Caco-2 (cell line): ENCODE measurements at regions of chr17 and their contacts with region 1.

Region 1: DNA sequence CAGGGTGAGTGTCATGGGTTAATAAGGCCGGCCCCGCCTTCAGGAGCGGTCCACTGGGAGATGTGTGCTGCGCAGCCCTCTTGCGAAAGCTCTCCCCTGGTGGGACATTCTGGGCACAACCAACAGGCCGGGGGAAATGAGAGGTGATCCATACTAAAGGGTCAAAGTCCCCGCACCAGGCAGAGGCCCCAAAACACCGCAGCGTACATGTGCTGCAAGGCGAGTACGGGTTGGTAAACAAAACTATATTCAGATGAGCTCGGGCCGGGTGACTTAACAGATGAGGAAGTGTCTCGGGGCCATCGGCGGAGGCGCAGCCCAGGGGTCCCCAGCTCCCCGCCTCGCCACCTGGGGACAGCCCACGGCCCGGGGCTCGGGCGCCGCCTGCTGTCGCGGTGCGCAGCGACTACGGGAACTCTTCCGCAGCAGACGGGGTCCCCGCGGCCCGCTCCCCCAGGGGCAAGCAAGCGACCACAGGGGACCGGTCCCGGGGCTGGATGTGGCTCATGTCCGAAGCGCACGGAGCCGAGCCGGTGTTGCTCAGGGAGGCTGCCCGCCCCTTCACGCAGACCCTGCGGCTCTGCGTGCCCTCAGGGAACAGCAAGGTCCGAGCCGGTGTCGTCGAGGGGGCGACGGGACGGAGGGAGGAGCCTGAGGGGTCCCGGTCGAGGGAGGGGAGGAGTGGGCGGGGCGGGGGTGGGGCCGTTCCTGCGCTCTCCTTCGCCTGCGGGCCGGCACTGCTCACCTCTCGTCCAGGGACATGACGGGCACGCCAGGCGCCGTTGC is at the start of gene RAB37:
- DNase-seq: peak; percentile 93 to 97
- H3K4me3 ChIP-seq: peak within 1 kb of the TSS; percentile 91
- H3K4me3 Mint-ChIP-seq: peak within 1 kb of the TSS; percentile 76
- H3K27ac Mint-ChIP-seq: peak within 1 kb of the TSS; percentile 71
- H3K4me1 ChIP-seq: peaks cover 24% of the 10 kb centered on the region
- H3K4me1 Mint-ChIP-seq: peaks cover 6% of the 10 kb centered on the region
- H3K27me3 ChIP-seq: no peaks in the 10 kb centered on the region
- H3K27me3 Mint-ChIP-seq: no peaks in the 10 kb centered on the region
- CTCF ChIP-seq: peak; percentile 56 to 66
- total RNA-seq, gene RAB37: 12.3 and 14.8 TPM in 2 replicates

Region 2: GRCh38 chr17:74599448-74599939 is 137.2 kb before region 1 on chr17:
- CTCF ChIA-PET with region 1: no interaction called
- POLR2A ChIA-PET with region 1: no interaction called
- intact Hi-C with region 1: no loop called
- DNase-seq: no peak
- H3K4me3 ChIP-seq: no peak overlapping the region
- H3K4me3 Mint-ChIP-seq: no peak overlapping the region
- H3K27ac Mint-ChIP-seq: no peak overlapping the region
- H3K4me1 ChIP-seq: no peaks in the 10 kb centered on the region
- H3K4me1 Mint-ChIP-seq: no peaks in the 10 kb centered on the region
- H3K27me3 ChIP-seq: peaks cover 1% of the 10 kb centered on the region; the same call in 1 of the 2 replicates
- H3K27me3 Mint-ChIP-seq: peaks cover 41% of the 10 kb centered on the region
- CTCF ChIP-seq: no peak

Region 3: GRCh38 chr17:74610108-74610507 is 126.6 kb before region 1 on chr17:
- CTCF ChIA-PET with region 1: no interaction called
- POLR2A ChIA-PET with region 1: no interaction called
- intact Hi-C with region 1: no loop called
- DNase-seq: peak in 1 of 2 experiments; percentile 46
- H3K4me3 ChIP-seq: no peak overlapping the region
- H3K4me3 Mint-ChIP-seq: no peak overlapping the region
- H3K27ac Mint-ChIP-seq: no peak overlapping the region
- H3K4me1 ChIP-seq: no peaks in the 10 kb centered on the region
- H3K4me1 Mint-ChIP-seq: no peaks in the 10 kb centered on the region
- H3K27me3 ChIP-seq: no peaks in the 10 kb centered on the region; the same call in 1 of the 2 replicates
- H3K27me3 Mint-ChIP-seq: peaks cover 21% of the 10 kb centered on the region
- CTCF ChIP-seq: no peak

Region 4: GRCh38 chr17:74671031-74671771 is 65.5 kb before region 1 on chr17:
- CTCF ChIA-PET with region 1: interaction called, 12 read pairs
- POLR2A ChIA-PET with region 1: no interaction called
- intact Hi-C with region 1: no loop called
- DNase-seq: peak; percentile 83 to 89
- H3K4me3 ChIP-seq: no peak overlapping the region
- H3K4me3 Mint-ChIP-seq: no peak overlapping the region
- H3K27ac Mint-ChIP-seq: no peak overlapping the region
- H3K4me1 ChIP-seq: peaks cover 13% of the 10 kb centered on the region; the same call in 1 of the 2 replicates
- H3K4me1 Mint-ChIP-seq: peaks cover 16% of the 10 kb centered on the region
- H3K27me3 ChIP-seq: no peaks in the 10 kb centered on the region
- H3K27me3 Mint-ChIP-seq: peaks cover 10% of the 10 kb centered on the region
- CTCF ChIP-seq: no peak

Region 5: DNA sequence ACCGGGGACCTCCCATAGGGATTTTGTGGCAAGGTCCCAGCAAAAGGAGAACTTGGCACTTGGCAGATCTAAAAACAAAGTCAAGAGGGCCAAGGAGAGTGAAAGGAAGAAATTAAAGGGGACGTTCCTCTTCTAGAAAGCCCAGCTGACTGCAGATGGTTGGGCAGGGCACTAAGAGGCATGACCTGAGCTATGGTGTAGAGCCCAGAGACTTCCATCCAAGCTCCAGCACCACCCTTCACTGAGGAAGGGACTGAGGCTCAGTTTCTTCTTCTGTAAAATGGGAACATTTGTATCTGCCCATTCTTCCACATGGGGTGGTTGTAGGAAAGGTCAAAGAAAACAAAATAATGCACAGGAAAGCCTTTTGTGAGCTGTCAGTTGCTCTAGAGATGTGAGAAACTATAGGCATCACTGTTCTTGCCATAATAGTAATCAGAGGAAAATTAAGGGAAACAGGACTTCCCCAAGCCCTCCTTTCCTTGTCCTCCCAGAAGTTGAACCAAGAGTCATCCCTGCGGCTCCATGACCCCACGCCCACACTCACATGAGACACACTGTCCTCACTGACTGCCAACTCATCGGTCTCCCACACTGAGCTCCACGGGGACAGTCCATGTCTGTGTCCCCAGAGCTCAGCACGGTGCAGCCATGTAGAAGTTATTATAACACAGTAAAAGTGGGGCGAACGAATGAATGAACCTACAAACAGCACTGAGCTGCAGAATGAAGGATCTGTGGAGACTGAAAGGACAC is 34.4 kb before region 1 on chr17:
- CTCF ChIA-PET with region 1: interaction called, 15 read pairs
- POLR2A ChIA-PET with region 1: interaction called, 3 read pairs
- intact Hi-C with region 1: no loop called
- DNase-seq: no peak
- H3K4me3 ChIP-seq: no peak overlapping the region
- H3K4me3 Mint-ChIP-seq: no peak overlapping the region
- H3K27ac Mint-ChIP-seq: no peak overlapping the region
- H3K4me1 ChIP-seq: peaks cover 2% of the 10 kb centered on the region; the same call in 1 of the 2 replicates
- H3K4me1 Mint-ChIP-seq: peaks cover 17% of the 10 kb centered on the region
- H3K27me3 ChIP-seq: no peaks in the 10 kb centered on the region
- H3K27me3 Mint-ChIP-seq: no peaks in the 10 kb centered on the region
- CTCF ChIP-seq: no peak

Region 6: GRCh38 chr17:74759243-74759801 is 22.6 kb after region 1 on chr17:
- CTCF ChIA-PET with region 1: interaction called, 25 read pairs
- POLR2A ChIA-PET with region 1: interaction called, 3 read pairs
- intact Hi-C with region 1: no loop called
- DNase-seq: peak; percentile 71 to 73
- H3K4me3 ChIP-seq: no peak overlapping the region
- H3K4me3 Mint-ChIP-seq: peak overlapping the region; percentile 69
- H3K27ac Mint-ChIP-seq: peak overlapping the region; percentile 94
- H3K4me1 ChIP-seq: peaks cover 73% of the 10 kb centered on the region
- H3K4me1 Mint-ChIP-seq: peaks cover 41% of the 10 kb centered on the region
- H3K27me3 ChIP-seq: no peaks in the 10 kb centered on the region
- H3K27me3 Mint-ChIP-seq: no peaks in the 10 kb centered on the region
- CTCF ChIP-seq: peak in 1 of 2 experiments; percentile 30

Region 7: DNA sequence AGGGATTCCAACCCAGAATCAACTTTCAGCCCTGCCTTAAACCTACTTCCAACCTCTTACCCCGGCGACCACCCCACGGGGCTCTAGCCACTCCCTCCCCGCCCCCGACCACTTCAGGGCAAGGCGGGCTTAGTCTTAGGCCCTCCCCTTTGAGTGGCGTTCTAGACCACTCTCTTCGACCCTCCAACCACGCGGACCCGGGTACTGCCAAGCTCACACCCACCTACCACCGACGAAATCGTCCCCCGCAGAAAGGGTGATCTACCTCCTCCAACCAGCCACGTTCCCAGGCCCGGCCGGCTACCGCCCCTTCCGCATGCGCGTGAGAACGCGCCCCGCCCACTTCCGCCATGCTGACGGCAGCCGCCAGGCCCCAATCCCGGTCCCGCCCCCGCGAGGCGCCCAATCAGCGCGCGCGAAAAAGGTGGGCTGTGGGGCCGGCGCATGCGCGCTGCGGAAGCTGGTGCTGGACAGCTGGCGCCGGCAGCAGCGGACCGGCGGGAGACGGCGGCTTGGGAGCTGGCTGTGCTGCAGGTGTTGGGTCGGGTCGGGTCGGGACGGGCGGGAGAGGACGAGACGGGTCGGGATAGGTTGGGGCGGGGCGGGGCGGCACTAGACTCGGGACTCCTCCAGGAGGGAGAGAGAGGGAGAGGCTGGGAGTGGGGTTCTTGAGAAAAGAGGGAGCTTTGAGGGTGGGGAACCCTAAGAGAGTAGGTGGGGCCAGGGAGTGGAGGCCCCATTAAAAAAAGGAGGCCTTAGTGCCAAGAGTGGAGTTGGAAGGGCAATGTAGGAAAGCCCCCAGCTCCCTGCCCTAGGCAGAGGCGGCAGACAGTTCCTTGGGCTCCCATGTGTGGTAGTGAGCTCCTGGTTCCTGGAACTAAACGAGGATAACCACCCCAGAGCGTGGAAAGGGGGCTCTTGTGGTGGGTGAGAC is 39.6 kb after region 1 on chr17 and contains the start of gene NAT9:
- CTCF ChIA-PET with region 1: interaction called, 26 read pairs
- POLR2A ChIA-PET with region 1: interaction called, 7 read pairs
- intact Hi-C with region 1: no loop called
- DNase-seq: peak; percentile 97 to 100
- H3K4me3 ChIP-seq: peak within 1 kb of the TSS; percentile 80
- H3K4me3 Mint-ChIP-seq: peak within 1 kb of the TSS; percentile 97
- H3K27ac Mint-ChIP-seq: peak within 1 kb of the TSS; percentile 95
- H3K4me1 ChIP-seq: peaks cover 27% of the 10 kb centered on the region
- H3K4me1 Mint-ChIP-seq: peaks cover 22% of the 10 kb centered on the region
- H3K27me3 ChIP-seq: no peaks in the 10 kb centered on the region
- H3K27me3 Mint-ChIP-seq: no peaks in the 10 kb centered on the region
- CTCF ChIP-seq: no peak
- total RNA-seq, gene NAT9: 84.5 and 89.5 TPM in 2 replicates

Region 8: GRCh38 chr17:74873038-74873873 is 136.6 kb after region 1 on chr17:
- CTCF ChIA-PET with region 1: interaction called, 11 read pairs
- POLR2A ChIA-PET with region 1: interaction called, 13 read pairs
- intact Hi-C with region 1: no loop called
- DNase-seq: peak; percentile 99 to 100
- H3K4me3 ChIP-seq: peak overlapping the region; percentile 83
- H3K4me3 Mint-ChIP-seq: peak overlapping the region; percentile 84
- H3K27ac Mint-ChIP-seq: peak overlapping the region; percentile 55
- H3K4me1 ChIP-seq: peaks cover 12% of the 10 kb centered on the region
- H3K4me1 Mint-ChIP-seq: peaks cover 21% of the 10 kb centered on the region
- H3K27me3 ChIP-seq: no peaks in the 10 kb centered on the region
- H3K27me3 Mint-ChIP-seq: no peaks in the 10 kb centered on the region
- CTCF ChIP-seq: no peak

Region 9: DNA sequence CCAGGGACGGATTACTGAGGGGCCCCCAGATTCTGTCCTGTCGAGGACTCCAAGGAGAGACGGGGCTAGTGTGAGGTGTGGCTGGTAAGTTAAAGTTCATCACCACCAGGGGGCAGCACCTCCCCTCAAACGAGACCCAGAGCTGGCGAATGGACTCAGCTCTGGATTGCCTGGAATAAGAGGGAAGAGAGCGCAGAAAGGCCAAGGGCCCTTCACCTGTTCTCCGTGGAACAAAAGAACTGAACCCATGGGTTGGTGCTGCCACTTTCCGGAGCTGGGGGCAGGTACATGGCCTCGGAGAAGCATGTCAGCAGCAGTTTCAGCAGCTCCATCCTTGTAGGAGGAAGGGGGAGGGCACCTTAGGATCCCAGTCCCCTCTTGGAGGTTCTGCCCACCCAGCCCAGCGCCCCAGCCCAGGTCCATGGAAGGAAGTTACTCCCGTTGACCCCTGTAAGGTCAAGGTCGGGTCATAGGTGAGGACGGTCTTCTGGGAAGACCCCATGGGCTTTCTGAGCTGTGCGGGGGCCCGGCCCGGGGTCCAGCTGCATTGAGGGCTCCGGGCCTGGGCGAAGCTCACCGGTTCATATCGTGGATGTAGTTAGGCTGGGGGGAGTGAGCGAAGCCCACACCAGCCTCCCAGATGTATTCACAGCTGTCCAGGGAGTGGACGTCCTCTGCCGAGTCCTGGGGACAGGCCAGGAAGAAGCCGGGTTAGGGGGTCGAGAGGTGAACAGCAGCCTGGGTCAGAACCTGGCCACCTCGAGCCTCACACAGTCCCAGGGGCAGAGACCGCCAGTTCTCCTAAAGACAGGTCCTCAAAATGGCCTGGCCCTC is 225.2 kb after region 1 on chr17:
- CTCF ChIA-PET with region 1: no interaction called
- POLR2A ChIA-PET with region 1: no interaction called
- intact Hi-C with region 1: no loop called
- DNase-seq: peak; percentile 90 to 93
- H3K4me3 ChIP-seq: no peak overlapping the region
- H3K4me3 Mint-ChIP-seq: no peak overlapping the region
- H3K27ac Mint-ChIP-seq: no peak overlapping the region
- H3K4me1 ChIP-seq: 0 out of 2 replicates have a peak, but pooled peaks cover 3% of the 10 kb centered on the region
- H3K4me1 Mint-ChIP-seq: peaks cover 21% of the 10 kb centered on the region
- H3K27me3 ChIP-seq: no peaks in the 10 kb centered on the region
- H3K27me3 Mint-ChIP-seq: no peaks in the 10 kb centered on the region
- CTCF ChIP-seq: peak; percentile 70 to 86

Region 10: GRCh38 chr17:75720725-75721462 is 984.2 kb after region 1 on chr17 and contains the start of gene ITGB4:
- CTCF ChIA-PET with region 1: no interaction called
- POLR2A ChIA-PET with region 1: no interaction called
- intact Hi-C with region 1: no loop called
- DNase-seq: peak; percentile 93 to 94
- H3K4me3 ChIP-seq: peak within 1 kb of the TSS; percentile 91
- H3K4me3 Mint-ChIP-seq: peak within 1 kb of the TSS; percentile 86
- H3K27ac Mint-ChIP-seq: peak within 1 kb of the TSS; percentile 85
- H3K4me1 ChIP-seq: peaks cover 25% of the 10 kb centered on the region
- H3K4me1 Mint-ChIP-seq: peaks cover 19% of the 10 kb centered on the region
- H3K27me3 ChIP-seq: no peaks in the 10 kb centered on the region
- H3K27me3 Mint-ChIP-seq: no peaks in the 10 kb centered on the region
- CTCF ChIP-seq: peak; percentile 18 to 24
- total RNA-seq, gene ITGB4: 50.8 and 55.4 TPM in 2 replicates